ENCODE measurements at regions of chr2 and their contacts with region 1.

Region 1: GRCh38 chr2:96407041-96407918 is 71.7 kb downstream of the NCAPH start:
- DNase-seq: peak; percentile 56
- H3K4me3 ChIP-seq: no peak overlapping the region
- H3K27ac ChIP-seq: no peak overlapping the region
- H3K4me1 ChIP-seq: peaks cover 9% of the 10 kb centered on the region
- H3K27me3 ChIP-seq: no peaks in the 10 kb centered on the region
- CTCF ChIP-seq: peak; percentile 84 to 89

Region 2: GRCh38 chr2:96470636-96471035 is 63.4 kb after region 1 on chr2:
- CTCF ChIA-PET with region 1: no interaction called
- dilution Hi-C with region 1: loop called (anchors 5 kb)
- in situ Hi-C with region 1: no loop called
- intact Hi-C with region 1: no loop called
- DNase-seq: no peak
- H3K4me3 ChIP-seq: no peak overlapping the region
- H3K27ac ChIP-seq: no peak overlapping the region
- H3K4me1 ChIP-seq: no peaks in the 10 kb centered on the region
- H3K27me3 ChIP-seq: no peaks in the 10 kb centered on the region
- CTCF ChIP-seq: peak; percentile 22 to 40

Region 3: DNA sequence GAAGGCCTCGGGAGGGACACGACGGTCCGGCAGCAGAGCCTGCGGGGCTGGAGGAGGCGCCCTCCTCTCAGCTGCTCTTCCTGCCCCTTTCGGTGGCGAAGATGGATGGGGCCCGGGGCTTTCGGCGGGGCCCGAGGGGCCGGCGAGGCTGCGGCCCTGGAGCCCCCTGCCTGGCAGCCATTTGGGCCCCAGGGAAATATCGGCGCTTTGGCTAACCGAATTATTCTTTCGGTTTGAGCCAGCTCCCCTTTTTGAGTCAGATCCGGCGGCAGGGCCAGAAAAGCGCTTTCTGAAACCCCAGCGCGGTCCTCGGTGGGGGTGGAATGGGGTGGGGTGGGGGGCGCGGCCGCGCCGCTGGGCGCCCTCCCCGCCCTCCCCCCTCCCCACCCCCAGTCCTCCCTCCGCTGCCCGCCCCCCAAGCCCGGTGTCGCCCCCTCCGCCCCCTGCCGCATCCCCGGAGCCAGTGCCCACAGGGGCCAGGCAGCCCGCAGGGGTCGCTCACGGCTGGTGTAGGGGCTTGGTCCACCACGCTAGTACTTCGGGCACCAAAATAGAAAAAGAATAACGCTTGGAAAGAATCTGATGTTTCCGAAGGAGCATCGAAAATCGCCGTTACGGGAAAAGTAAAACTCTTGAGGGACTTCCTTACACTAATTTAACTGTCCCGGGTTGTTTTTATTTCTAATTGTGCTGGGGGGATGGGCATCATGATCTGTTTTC is 120.2 kb after region 1 on chr2:
- CTCF ChIA-PET with region 1: no interaction called
- dilution Hi-C with region 1: loop called (anchors 5 kb)
- in situ Hi-C with region 1: no loop called
- intact Hi-C with region 1: no loop called
- DNase-seq: no peak
- H3K4me3 ChIP-seq: peak overlapping the region; percentile 47 to 50 (median 47)
- H3K27ac ChIP-seq: no peak overlapping the region
- H3K4me1 ChIP-seq: peaks cover 18% of the 10 kb centered on the region
- H3K27me3 ChIP-seq: peaks cover 4% of the 10 kb centered on the region
- CTCF ChIP-seq: peak in 1 of 2 donors; percentile 22

Region 4: DNA sequence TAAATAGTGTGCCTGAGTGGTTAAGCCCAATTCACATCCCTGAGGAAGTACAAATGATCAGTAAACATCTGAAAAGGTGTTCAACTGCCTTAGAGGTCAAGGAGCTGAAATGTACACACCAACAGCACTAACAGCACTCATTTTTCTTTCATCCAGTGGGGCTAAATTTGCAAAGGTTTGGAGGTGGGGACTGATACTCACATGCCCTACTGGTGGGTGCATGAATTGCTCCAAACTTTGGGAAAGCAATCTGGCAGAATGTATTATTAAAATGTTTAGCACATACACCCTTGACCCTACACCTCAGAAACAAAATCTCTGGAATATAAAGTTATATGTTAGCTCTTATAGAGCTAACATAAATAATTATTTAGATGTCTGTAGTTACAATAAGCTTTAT is 598.1 kb after region 1 on chr2:
- CTCF ChIA-PET with region 1: no interaction called
- dilution Hi-C with region 1: no loop called
- in situ Hi-C with region 1: no loop called
- intact Hi-C with region 1: no loop called
- DNase-seq: no peak
- H3K4me3 ChIP-seq: no peak overlapping the region
- H3K27ac ChIP-seq: no peak overlapping the region
- H3K4me1 ChIP-seq: no peaks in the 10 kb centered on the region
- H3K27me3 ChIP-seq: no peaks in the 10 kb centered on the region
- CTCF ChIP-seq: peak; percentile 41

Measured in mammary epithelial cell (primary cell).